ENCODE measurements at regions of chr12 and their contacts with region 1.

Region 1: DNA sequence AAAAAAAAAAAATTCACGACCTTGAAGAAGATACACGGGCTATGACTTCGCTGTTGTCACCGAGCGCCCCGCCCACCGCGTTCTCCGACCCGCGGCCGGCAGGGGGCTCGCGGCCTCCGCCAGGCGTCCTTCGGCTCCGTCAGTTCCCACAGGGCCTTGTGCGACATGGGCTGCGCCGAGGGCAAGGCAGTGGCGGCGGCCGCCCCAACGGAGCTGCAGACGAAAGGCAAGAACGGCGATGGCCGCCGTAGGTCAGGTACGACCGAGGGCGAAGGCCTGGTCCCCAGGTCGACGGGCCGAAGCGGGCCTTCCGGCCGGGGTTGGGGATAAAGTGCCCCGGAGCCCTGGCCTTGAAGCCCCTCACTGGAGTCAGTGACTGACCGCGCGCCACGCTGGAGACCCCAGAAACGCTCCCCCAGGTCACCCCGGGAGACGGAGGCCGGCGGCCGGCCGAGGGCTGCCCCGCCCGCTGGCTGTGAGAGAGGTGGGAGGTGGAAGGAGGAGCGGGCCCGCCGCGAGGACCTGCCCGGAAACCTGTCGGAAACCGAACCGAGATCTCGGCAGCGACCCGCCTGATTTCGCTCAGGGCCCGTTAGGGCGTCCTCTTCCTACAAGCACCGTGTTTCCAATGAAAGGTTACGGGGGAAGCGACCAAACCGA is at the start of gene TXNRD1:
- DNase-seq: peak; percentile 88

Region 2: DNA sequence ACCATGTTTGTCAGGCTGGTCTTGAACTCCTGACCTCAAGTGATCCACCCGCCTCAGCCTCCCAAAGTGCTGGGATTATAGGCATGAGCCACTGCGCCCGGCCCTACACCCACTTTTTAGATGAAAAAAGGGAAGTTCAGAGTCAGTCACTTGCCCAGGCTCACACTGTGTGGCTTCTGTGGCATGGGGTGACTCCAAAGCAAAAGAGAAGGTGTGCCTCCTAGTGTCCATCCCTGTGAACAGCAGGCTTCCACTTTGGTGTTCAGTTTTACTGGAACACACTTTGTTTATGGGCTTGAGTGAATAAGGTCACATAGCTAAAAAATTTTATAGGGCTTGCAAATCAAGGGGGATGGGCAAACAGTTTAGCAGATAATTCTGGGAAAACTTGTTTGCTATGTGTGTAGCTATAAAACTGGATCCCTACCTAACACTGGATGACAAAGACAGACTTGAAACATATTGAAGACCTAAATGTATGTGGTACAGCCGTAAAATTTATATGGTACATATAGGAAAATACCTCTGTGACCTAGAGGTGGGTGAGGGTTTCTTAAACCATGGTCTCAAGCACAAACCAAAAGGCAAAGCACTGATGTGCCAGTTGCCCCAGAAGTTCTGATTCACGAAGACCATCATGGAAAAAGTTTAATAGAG is 142.7 kb after region 1 on chr12:
- in situ Hi-C with region 1: loop called (anchors 25 kb)
- DNase-seq: peak; percentile 91

Region 3: DNA sequence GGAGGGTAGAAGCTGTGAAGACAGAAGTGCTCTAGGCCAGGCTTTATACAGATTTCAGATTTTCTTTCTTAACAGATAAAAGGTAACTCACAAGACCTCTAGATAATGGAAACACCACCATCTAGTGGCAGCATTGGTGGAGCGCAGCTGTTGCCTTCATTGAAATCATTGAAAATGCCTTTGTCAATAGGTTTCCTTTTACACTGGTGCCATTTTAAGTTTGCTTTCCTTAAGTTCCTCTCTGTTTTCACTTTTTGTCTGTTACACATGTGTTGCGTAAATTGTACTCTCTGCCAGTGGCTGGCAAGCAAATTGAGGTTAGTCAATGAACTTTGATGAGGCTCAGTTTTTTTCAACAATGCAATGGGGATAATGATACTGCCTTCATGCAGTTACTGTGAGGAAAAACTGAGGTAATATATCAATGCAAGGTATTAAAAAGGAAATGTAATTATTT is 837.4 kb after region 1 on chr12:
- in situ Hi-C with region 1: loop called (anchors 25 kb)
- DNase-seq: peak; percentile 85

Measured in KBM-7 (cell line).